BJ (cell line): ENCODE measurements at regions of chr18 and their contacts with region 1.

Region 1: DNA sequence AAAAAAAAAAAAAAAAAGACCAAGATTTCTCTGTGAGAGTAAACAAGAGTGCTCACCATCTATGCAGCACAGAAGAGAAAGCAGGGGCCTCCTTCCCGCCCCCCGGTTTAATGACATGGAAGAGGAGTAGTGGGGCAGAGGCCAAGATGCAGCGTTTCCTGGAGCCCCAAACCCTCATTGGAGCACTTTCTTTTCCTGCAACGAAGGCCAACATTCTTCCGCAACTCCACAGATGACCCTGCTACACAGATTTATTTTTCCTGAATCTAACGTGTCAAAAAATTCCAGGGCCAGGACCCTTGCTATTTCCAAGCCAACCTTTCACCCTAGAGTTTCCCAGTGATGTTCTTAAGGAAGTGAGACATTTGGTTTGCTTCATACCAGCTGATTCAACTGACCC is 189.6 kb downstream of the MIB1 start:
- DNase-seq: no peak
- H3K4me3 ChIP-seq: no peak overlapping the region
- H3K27me3 ChIP-seq: no peaks in the 10 kb centered on the region; the same call in 1 of the 2 replicates
- CTCF ChIP-seq: no peak

Region 2: GRCh38 chr18:21943456-21943855 is 13.3 kb after region 1 on chr18:
- CTCF ChIA-PET with region 1: no interaction called
- POLR2A ChIA-PET with region 1: no interaction called
- DNase-seq: no peak
- H3K4me3 ChIP-seq: no peak overlapping the region
- H3K27me3 ChIP-seq: no peaks in the 10 kb centered on the region; the same call in 1 of the 2 replicates
- CTCF ChIP-seq: no peak

Region 3: DNA sequence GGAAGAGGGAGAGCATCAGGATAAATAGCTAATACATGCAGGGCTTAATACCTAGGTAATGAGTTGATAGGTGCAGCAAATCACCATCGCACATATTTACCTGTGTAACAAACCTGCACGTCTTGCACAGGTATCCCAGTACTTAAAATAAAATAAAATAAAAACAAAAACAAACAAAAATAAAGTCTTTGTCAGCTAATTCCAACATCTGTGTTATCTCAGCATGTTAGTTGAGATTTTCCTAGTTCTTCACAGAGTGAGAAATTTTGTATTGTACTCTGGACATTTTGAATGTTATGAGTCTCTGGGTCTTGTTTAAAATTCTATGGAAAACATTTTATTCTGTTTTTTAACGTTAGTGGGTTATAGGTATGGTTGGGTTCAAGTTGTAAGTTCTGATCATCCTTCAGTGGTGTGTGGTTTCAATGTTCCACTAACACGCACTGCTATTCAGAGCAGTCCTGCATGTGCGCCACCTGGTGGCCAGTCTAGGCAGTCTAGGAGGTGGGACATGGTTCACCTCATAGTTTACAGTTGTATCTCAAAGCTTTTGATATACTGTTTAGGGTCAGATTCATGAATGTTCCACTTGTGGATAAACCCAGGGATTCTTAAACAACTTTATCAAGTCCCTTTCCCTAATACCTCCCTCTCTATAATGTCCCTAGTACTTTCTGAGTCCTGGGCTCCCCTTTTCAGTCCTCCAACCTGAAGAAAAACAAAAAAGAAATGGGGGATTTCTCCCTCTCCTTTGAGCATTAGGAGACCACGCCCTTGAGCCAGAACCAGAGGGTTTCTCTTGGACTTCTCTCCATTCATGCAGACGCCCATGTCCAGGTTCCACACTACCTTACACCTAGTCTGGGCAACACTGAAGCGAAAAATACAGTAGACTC is 25.8 kb after region 1 on chr18:
- CTCF ChIA-PET with region 1: interaction called, 3 read pairs
- POLR2A ChIA-PET with region 1: interaction called, 10 read pairs
- DNase-seq: no peak
- H3K4me3 ChIP-seq: no peak overlapping the region
- H3K27me3 ChIP-seq: no peaks in the 10 kb centered on the region; the same call in 1 of the 2 replicates
- CTCF ChIP-seq: peak; percentile 97

Region 4: GRCh38 chr18:23049698-23050373 is 1119.7 kb after region 1 on chr18:
- CTCF ChIA-PET with region 1: no interaction called
- POLR2A ChIA-PET with region 1: no interaction called
- DNase-seq: no peak
- H3K4me3 ChIP-seq: no peak overlapping the region
- H3K27me3 ChIP-seq: no peaks in the 10 kb centered on the region
- CTCF ChIP-seq: no peak